CD8-positive, alpha-beta T cell (primary cell): ENCODE measurements at regions of chr17 and their contacts with region 1.

Region 1: GRCh38 chr17:2416010-2416734 is 15.3 kb upstream of the MNT start:
- DNase-seq: peak; percentile 74 to 92 (median 88)
- ATAC-seq: peak; percentile 93
- H3K4me3 ChIP-seq: no peak overlapping the region
- H3K4me3 Mint-ChIP-seq: no peak overlapping the region
- H3K27ac ChIP-seq: no peak overlapping the region
- H3K27ac Mint-ChIP-seq: no peak overlapping the region
- H3K4me1 ChIP-seq: peaks cover 4% of the 10 kb centered on the region
- H3K4me1 Mint-ChIP-seq: peaks cover 6% of the 10 kb centered on the region
- H3K27me3 ChIP-seq: no peaks in the 10 kb centered on the region
- H3K27me3 Mint-ChIP-seq: no peaks in the 10 kb centered on the region
- CTCF ChIP-seq: peak; percentile 99

Region 2: DNA sequence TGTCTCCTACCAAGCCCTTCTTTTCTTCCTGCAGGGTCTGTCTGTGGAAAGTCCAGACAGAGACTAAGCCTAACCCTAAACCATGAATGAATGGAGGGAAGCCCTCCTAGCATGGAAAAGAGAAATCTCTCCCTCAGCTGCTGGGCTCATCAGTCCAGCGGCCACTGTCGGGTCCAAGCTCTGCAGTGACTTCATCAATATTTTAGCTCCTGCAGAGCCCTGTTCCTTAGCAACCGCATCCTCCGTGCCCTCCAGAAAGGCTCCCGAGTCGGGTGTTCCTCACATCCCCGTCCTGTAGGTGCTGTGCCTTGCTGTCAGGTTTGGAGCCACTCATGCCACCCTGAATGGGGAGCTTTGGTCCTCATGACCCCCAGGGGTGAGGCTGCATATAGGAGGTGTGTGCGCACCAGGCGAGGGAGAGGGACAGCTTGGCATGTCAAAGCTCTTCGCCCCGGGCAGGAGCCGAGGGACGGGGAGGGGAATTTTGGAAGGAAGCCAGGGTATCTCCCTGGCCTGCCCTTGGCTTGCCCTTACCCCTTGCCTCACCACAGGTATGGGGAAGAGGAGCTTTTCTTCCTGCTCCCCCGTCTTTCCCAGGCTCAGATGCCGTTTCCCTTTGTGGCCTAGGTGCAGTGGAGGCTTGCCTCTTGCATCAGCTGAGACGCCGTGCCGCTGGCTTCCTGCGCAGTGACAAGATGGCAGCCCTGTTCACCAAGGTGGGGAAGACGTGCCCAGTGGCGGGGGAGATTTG is 55.0 kb before region 1 on chr17:
- CTCF ChIA-PET with region 1: interaction called, 16 read pairs
- POLR2A ChIA-PET with region 1: no interaction called
- intact Hi-C with region 1: no loop called
- DNase-seq: no peak
- ATAC-seq: no peak
- H3K4me3 ChIP-seq: no peak overlapping the region
- H3K4me3 Mint-ChIP-seq: no peak overlapping the region
- H3K27ac ChIP-seq: no peak overlapping the region
- H3K27ac Mint-ChIP-seq: no peak overlapping the region
- H3K4me1 ChIP-seq: no peaks in the 10 kb centered on the region
- H3K4me1 Mint-ChIP-seq: no peaks in the 10 kb centered on the region
- H3K27me3 ChIP-seq: no peaks in the 10 kb centered on the region
- H3K27me3 Mint-ChIP-seq: no peaks in the 10 kb centered on the region
- CTCF ChIP-seq: no peak

Region 3: GRCh38 chr17:2380226-2380922 is 35.8 kb before region 1 on chr17:
- CTCF ChIA-PET with region 1: interaction called, 465 read pairs
- POLR2A ChIA-PET with region 1: interaction called, 26 read pairs
- intact Hi-C with region 1: loop called (anchors 1 kb)
- DNase-seq: no peak
- ATAC-seq: no peak
- H3K4me3 ChIP-seq: no peak overlapping the region
- H3K4me3 Mint-ChIP-seq: no peak overlapping the region
- H3K27ac ChIP-seq: no peak overlapping the region
- H3K27ac Mint-ChIP-seq: no peak overlapping the region
- H3K4me1 ChIP-seq: peaks cover 12% of the 10 kb centered on the region
- H3K4me1 Mint-ChIP-seq: peaks cover 2% of the 10 kb centered on the region
- H3K27me3 ChIP-seq: no peaks in the 10 kb centered on the region
- H3K27me3 Mint-ChIP-seq: no peaks in the 10 kb centered on the region
- CTCF ChIP-seq: no peak

Region 4: DNA sequence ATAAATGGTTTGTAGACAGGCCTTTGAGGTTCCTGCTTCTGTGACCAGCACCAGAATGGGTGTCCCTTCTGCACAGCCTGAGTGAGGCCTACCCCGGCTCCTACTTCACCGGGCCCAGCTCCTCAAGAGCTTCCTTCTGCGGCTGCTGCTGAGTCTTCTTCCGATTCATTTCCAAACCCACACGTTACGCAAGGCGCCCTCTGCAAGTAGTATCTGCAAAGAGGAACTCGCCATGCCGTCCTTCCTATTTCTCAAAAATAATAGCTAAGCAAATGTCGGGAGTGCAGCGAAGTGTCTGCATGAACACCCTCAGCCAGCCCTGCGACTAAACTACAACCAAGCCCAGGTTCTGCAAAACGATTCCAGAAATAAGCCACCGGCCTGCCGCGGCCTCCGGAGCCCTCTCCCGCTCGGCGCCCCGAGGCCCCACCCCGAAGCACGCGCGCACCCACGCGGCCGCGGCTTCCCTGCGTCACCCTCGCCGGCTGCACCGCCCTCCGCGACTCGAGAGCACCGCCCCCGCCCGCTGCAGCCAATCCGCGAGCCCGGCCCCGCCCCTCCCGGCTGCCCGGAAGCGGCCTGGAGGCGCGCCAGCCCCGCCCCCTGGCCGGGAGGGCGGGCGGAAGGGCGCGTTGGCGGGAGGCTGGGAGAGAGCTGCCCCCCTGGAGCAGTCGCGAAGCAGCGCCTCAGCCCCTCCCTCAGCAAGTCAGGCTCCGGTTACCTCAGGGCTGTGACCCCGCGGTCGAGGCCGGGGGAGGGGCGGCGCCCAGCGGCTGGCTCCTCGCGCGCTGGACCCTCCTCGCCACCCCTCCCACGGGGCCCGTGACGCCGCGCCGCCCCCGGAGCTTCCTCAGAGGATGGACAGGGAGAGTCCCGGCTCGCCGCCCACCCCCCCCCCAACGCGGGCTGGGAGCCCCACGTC is 23.7 kb before region 1 on chr17:
- CTCF ChIA-PET with region 1: interaction called, 465 read pairs
- POLR2A ChIA-PET with region 1: interaction called, 8 read pairs
- intact Hi-C with region 1: no loop called
- DNase-seq: peak; percentile 95 to 99 (median 97)
- ATAC-seq: peak; percentile 66
- H3K4me3 ChIP-seq: peak overlapping the region; percentile 83 to 95
- H3K4me3 Mint-ChIP-seq: peak overlapping the region; percentile 91
- H3K27ac ChIP-seq: peak overlapping the region; percentile 95 to 100
- H3K27ac Mint-ChIP-seq: peak overlapping the region; percentile 97
- H3K4me1 ChIP-seq: peaks cover 53% of the 10 kb centered on the region
- H3K4me1 Mint-ChIP-seq: peaks cover 50% of the 10 kb centered on the region
- H3K27me3 ChIP-seq: no peaks in the 10 kb centered on the region
- H3K27me3 Mint-ChIP-seq: no peaks in the 10 kb centered on the region
- CTCF ChIP-seq: no peak

Region 5: GRCh38 chr17:2435181-2435741 is 19.1 kb after region 1 on chr17:
- CTCF ChIA-PET with region 1: interaction called, 22 read pairs
- POLR2A ChIA-PET with region 1: no interaction called
- intact Hi-C with region 1: no loop called
- DNase-seq: no peak
- ATAC-seq: no peak
- H3K4me3 ChIP-seq: no peak overlapping the region
- H3K4me3 Mint-ChIP-seq: no peak overlapping the region
- H3K27ac ChIP-seq: no peak overlapping the region
- H3K27ac Mint-ChIP-seq: no peak overlapping the region
- H3K4me1 ChIP-seq: no peaks in the 10 kb centered on the region
- H3K4me1 Mint-ChIP-seq: no peaks in the 10 kb centered on the region
- H3K27me3 ChIP-seq: no peaks in the 10 kb centered on the region
- H3K27me3 Mint-ChIP-seq: no peaks in the 10 kb centered on the region
- CTCF ChIP-seq: no peak

Region 6: DNA sequence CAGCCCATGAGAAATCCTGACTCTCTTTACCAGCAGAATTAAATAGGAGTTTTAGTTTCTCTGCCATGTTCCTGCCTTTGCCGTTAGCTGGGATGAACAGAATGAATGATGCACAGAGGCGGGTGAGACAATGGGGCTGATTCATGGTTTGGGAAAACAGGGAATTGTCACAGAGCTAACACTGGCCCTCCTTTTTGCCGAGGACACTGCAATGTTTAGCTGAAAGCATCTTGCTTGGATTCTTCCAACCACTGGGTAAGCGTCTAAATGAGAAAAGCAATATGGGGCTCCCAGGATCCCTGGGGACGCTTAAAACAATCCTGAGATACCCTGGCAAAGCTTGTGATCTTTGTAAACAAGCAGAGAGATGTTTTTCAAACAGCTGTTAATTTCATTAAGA is 164.5 kb after region 1 on chr17:
- CTCF ChIA-PET with region 1: no interaction called
- POLR2A ChIA-PET with region 1: no interaction called
- intact Hi-C with region 1: no loop called
- DNase-seq: no peak
- ATAC-seq: no peak
- H3K4me3 ChIP-seq: no peak overlapping the region
- H3K4me3 Mint-ChIP-seq: no peak overlapping the region
- H3K27ac ChIP-seq: no peak overlapping the region
- H3K27ac Mint-ChIP-seq: no peak overlapping the region
- H3K4me1 ChIP-seq: no peaks in the 10 kb centered on the region
- H3K4me1 Mint-ChIP-seq: no peaks in the 10 kb centered on the region
- H3K27me3 ChIP-seq: peaks cover 0 to 3% of the 10 kb centered on the region in 2 experiments
- H3K27me3 Mint-ChIP-seq: peaks cover 4% of the 10 kb centered on the region
- CTCF ChIP-seq: no peak